ENCODE measurements at regions of chr6 and their contacts with region 1.

Region 1: GRCh38 chr6:55293116-55293515 is 34.2 kb upstream of the GFRAL start:
- DNase-seq: no peak
- H3K4me3 ChIP-seq: no peak overlapping the region
- H3K27ac ChIP-seq: no peak overlapping the region
- H3K4me1 ChIP-seq: no peaks in the 10 kb centered on the region
- H3K27me3 ChIP-seq: no peaks in the 10 kb centered on the region
- CTCF ChIP-seq: peak in 1 of 3 experiments; percentile 49; a peak in 2 of 4 replicates
- EP300 ChIP-seq: no peak
- POLR2A ChIP-seq: no peak
- RAD21 ChIP-seq: peak in 1 of 2 experiments; percentile 38; a peak in 2 of 4 replicates

Region 2: DNA sequence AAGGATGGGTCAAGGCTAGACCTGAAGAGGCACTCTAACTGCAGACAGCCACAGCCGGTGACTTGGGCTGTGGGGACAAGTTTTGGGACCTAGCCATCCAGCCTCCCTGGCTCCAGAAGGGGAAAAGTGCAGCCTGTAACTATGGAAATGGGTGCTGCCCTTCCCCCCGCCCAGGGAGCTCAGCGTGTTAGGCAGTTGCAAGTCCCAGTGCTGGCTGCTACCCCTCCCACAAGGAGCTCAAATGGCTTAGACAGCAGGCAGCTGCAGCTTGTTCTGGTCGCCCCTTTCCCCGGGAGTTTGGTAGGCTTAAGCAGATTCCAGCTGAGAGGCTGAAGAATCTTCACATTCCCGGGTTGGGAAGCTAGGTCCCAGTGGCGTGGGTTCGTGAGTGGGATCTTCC is 284.0 kb before region 1 on chr6:
- CTCF ChIA-PET with region 1: no interaction called
- POLR2A ChIA-PET with region 1: no interaction called
- DNase-seq: no peak
- H3K4me3 ChIP-seq: no peak overlapping the region
- H3K27ac ChIP-seq: no peak overlapping the region
- H3K4me1 ChIP-seq: peaks cover 0 to 6% (median 0%) of the 10 kb centered on the region in 4 experiments; a peak in 1 of 7 replicates
- H3K27me3 ChIP-seq: no peaks in the 10 kb centered on the region
- CTCF ChIP-seq: no peak
- EP300 ChIP-seq: no peak
- POLR2A ChIP-seq: no peak
- RAD21 ChIP-seq: no peak

Region 3: GRCh38 chr6:55282115-55282514 is 11.0 kb before region 1 on chr6:
- CTCF ChIA-PET with region 1: interaction called, 12 read pairs
- POLR2A ChIA-PET with region 1: no interaction called
- DNase-seq: no peak
- H3K4me3 ChIP-seq: no peak overlapping the region
- H3K27ac ChIP-seq: no peak overlapping the region
- H3K4me1 ChIP-seq: peaks cover 0 to 4% (median under 1%) of the 10 kb centered on the region in 4 experiments; a peak in 4 of 7 replicates
- H3K27me3 ChIP-seq: no peaks in the 10 kb centered on the region
- CTCF ChIP-seq: no peak
- EP300 ChIP-seq: no peak
- POLR2A ChIP-seq: no peak
- RAD21 ChIP-seq: no peak